Activated B cell treated with CpG ODN at 0.5 μM for 24 hours (primary cell): ENCODE measurements at regions of chr14 and their contacts with region 1.

Region 1: DNA sequence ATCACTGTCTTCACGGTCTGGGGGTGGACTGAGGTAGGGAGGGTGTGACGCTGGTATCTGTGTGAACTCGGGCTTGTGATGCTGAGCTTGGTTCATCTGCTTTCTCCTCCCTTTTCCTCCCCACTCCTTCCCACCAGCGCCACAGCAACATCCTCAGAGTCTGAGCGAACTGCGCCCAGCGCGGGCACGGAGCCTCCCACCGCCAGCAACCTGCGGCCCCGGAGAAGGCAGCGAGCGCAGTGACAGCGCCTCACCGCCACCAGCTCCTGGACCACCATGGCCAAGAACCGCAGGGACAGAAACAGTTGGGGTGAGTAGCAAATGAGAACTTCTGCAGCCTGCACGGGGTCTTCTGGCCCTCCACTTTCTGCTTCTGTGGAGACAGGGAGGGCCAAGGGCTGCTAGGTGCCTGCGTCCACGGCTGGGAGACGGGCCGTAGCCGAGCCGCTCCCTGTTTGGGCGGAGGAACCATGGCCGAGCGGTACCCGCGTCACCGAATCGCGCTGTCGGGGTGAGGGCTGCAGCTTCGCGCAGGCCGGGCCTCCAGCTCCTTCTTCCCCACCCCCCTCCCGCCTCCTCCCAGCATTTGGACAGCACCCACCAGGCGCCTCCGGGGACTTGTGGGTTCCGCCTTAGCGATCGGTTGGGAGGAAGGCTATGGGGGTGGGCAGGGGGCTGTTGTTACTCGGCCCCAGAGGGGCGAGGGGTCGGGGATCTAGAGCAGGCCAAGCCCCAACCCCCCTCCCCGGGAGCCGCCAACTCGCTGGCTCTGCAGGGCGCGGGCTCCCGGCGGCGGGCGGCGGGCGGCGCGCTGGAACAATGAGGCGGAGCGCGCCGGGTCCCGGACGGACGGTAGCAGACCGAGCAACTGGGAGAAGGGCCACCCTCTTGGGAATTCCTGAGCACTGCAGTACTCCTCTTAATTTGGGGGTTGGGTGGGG is at the start of gene ATL1:
- DNase-seq: peak; percentile 37
- ATAC-seq: peak; percentile 84
- H3K4me3 Mint-ChIP-seq: peak within 1 kb of the TSS; percentile 80
- H3K27ac Mint-ChIP-seq: no peak within 1 kb of the TSS
- H3K4me1 Mint-ChIP-seq: peaks cover 19% of the 10 kb centered on the region
- H3K27me3 Mint-ChIP-seq: peaks cover 36% of the 10 kb centered on the region
- CTCF ChIP-seq: no peak
- total RNA-seq, gene ATL1: 0.49 and 1.4 TPM in 2 replicates

Region 2: DNA sequence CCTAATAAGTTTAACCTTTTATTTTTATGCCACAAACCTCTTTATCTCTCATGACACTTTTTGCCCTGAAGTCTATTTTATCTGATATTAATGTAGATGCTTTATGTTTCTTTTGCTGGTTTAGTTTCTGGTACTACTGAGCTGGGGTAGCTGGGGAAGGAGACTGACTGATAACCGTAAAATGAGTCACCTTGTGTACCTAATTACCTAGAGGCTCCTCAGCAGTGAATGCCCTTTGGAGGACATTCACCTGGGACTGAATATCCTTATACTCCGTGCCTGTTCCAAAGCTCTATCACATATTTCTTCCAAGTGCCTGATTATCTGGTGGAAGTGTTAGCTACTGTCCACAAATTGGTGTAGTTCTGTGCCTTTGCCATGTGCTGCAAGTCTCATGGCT is 13.6 kb after region 1 on chr14:
- CTCF ChIA-PET with region 1: no interaction called
- POLR2A ChIA-PET with region 1: interaction called, 3 read pairs
- intact Hi-C with region 1: loop called (anchors 2 kb)
- DNase-seq: no peak
- ATAC-seq: no peak
- H3K4me3 Mint-ChIP-seq: no peak overlapping the region
- H3K27ac Mint-ChIP-seq: no peak overlapping the region
- H3K4me1 Mint-ChIP-seq: no peaks in the 10 kb centered on the region
- H3K27me3 Mint-ChIP-seq: no peaks in the 10 kb centered on the region
- CTCF ChIP-seq: no peak